Activated CD4-positive, alpha-beta T cell treated with anti-CD3 and anti-CD28 coated beads, Interleukin-2, amount 10 ng/mL, durations not matched to agents 24 days and 14 days (primary cell): ENCODE measurements at regions of chr16 and their contacts with region 1.

Region 1: DNA sequence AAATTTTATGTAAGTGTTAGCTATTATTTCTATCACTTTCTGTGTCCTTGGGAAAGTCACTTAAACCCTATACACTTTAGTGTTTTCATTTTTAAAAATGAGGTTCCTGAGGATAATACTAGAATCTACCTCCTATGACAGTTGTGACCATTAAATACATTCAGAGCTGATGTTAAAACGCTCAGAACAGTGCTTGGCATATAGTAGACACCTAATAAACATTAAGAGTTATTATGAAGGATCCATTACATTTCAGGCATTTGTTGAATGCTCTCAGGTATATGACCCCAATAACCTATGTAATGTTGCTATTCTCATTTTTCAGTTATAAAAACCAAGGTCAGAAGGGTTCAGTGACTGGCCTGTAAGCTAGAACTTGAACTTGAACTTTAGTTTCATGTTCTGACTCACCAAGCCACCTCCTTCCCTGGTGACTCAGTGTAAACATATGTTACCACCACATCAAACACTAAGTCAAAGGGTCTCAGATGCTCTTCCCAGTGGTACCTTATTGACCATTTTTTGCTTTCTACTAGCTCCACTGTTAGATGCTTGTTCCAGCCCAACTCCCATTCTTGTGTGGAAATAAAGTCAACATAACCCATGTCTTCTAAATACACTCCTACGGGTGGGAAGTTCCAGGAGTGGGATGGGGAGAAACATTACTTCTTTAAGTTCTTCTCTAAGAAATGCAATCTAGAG is 47.6 kb downstream of the HSD17B2 start:
- DNase-seq: peak; percentile 67
- H3K4me3 Mint-ChIP-seq: no peak overlapping the region
- H3K27ac Mint-ChIP-seq: peak overlapping the region; percentile 20
- H3K4me1 Mint-ChIP-seq: peaks cover 8% of the 10 kb centered on the region
- H3K27me3 Mint-ChIP-seq: peaks cover 38% of the 10 kb centered on the region

Region 2: GRCh38 chr16:82070656-82071369 is 11.9 kb before region 1 on chr16:
- intact Hi-C with region 1: loop called (anchors 1 kb)
- DNase-seq: no peak
- H3K4me3 Mint-ChIP-seq: no peak overlapping the region
- H3K27ac Mint-ChIP-seq: no peak overlapping the region
- H3K4me1 Mint-ChIP-seq: peaks cover 6% of the 10 kb centered on the region
- H3K27me3 Mint-ChIP-seq: peaks cover 3% of the 10 kb centered on the region

Region 3: DNA sequence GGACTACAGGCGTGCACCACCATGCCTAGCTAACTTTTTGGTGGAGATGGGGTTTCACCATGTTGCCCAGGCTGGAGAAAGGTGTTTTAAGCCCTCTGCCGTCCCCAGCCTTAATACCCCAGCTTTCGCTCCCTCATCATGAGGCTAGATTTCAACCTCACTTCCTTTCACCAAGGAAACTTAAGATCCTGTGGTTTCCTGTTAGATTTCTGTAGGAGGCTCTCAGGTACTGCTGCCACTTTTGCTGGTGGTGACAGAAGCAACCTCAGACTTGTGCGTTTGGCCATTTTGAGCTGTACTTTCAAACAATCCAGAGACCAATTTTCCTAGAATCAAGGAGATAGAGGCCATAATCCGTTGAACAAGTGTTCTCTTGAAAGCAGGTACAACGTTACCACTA is 51.1 kb after region 1 on chr16:
- intact Hi-C with region 1: loop called (anchors 5 kb)
- DNase-seq: peak; percentile 75
- H3K4me3 Mint-ChIP-seq: peak overlapping the region; percentile 56
- H3K27ac Mint-ChIP-seq: no peak overlapping the region
- H3K4me1 Mint-ChIP-seq: peaks cover 15% of the 10 kb centered on the region
- H3K27me3 Mint-ChIP-seq: peaks cover 1% of the 10 kb centered on the region

Region 4: GRCh38 chr16:82169861-82170845 is 87.5 kb after region 1 on chr16 and contains the start of gene MPHOSPH6:
- intact Hi-C with region 1: loop called (anchors 5 kb)
- DNase-seq: peak; percentile 97
- H3K4me3 Mint-ChIP-seq: peak within 1 kb of the TSS; percentile 91
- H3K27ac Mint-ChIP-seq: peak within 1 kb of the TSS; percentile 96
- H3K4me1 Mint-ChIP-seq: peaks cover 15% of the 10 kb centered on the region
- H3K27me3 Mint-ChIP-seq: peaks cover 33% of the 10 kb centered on the region
- total RNA-seq, gene MPHOSPH6: 54.1 and 54.8 TPM in 2 replicates

Region 5: DNA sequence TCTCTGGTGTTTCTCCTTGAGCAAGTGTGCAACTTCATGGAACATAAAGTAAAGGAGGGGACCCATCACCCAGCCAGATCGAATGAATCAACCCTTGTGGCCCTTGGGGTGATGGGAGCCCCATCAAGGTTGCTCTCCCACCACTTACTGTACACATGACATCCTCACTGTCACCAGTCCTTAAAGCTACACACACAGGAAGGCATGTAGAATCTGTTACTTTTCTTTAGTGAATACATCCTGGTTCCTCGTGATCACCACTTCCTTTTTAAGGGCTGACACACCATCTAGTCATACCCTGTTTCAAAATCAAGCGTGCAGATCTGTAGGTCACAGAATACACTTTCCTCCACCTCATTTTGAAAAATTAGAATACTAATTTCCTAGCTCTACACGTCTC is 110.0 kb after region 1 on chr16:
- intact Hi-C with region 1: loop called (anchors 1 kb)
- DNase-seq: peak; percentile 77
- H3K4me3 Mint-ChIP-seq: peak overlapping the region; percentile 41
- H3K27ac Mint-ChIP-seq: peak overlapping the region; percentile 89
- H3K4me1 Mint-ChIP-seq: peaks cover 21% of the 10 kb centered on the region
- H3K27me3 Mint-ChIP-seq: peaks cover 7% of the 10 kb centered on the region